HCT116 (cell line): ENCODE measurements at regions of chr7 and their contacts with region 1.

Region 1: GRCh38 chr7:93245525-93246432 is 13.6 kb downstream of the VPS50 start:
- DNase-seq: no peak
- ATAC-seq: no peak
- H3K4me3 ChIP-seq: no peak overlapping the region
- H3K27ac ChIP-seq: no peak overlapping the region
- H3K4me1 ChIP-seq: no peaks in the 10 kb centered on the region
- H3K27me3 ChIP-seq: no peaks in the 10 kb centered on the region
- CTCF ChIP-seq: peak; percentile 35 to 70 (median 63); a peak in 5 of 6 replicates
- POLR2A ChIP-seq: no peak
- RAD21 ChIP-seq: peak; percentile 72

Region 2: GRCh38 chr7:92973974-92974373 is 271.8 kb before region 1 on chr7:
- CTCF ChIA-PET with region 1: no interaction called
- POLR2A ChIA-PET with region 1: no interaction called
- RAD21 ChIA-PET with region 1: no interaction called
- intact Hi-C with region 1: no loop called
- DNase-seq: no peak
- ATAC-seq: no peak
- H3K4me3 ChIP-seq: no peak overlapping the region
- H3K27ac ChIP-seq: no peak overlapping the region
- H3K4me1 ChIP-seq: no peaks in the 10 kb centered on the region
- H3K27me3 ChIP-seq: no peaks in the 10 kb centered on the region
- CTCF ChIP-seq: no peak
- POLR2A ChIP-seq: no peak
- RAD21 ChIP-seq: no peak

Region 3: GRCh38 chr7:93430917-93431588 is 185.3 kb after region 1 on chr7:
- CTCF ChIA-PET with region 1: no interaction called
- POLR2A ChIA-PET with region 1: no interaction called
- RAD21 ChIA-PET with region 1: no interaction called
- intact Hi-C with region 1: loop called (anchors 10 kb)
- DNase-seq: no peak
- ATAC-seq: no peak
- H3K4me3 ChIP-seq: no peak overlapping the region
- H3K27ac ChIP-seq: no peak overlapping the region
- H3K4me1 ChIP-seq: no peaks in the 10 kb centered on the region
- H3K27me3 ChIP-seq: no peaks in the 10 kb centered on the region
- CTCF ChIP-seq: no peak
- POLR2A ChIP-seq: no peak
- RAD21 ChIP-seq: no peak

Region 4: GRCh38 chr7:94087664-94088352 is 842.0 kb after region 1 on chr7:
- CTCF ChIA-PET with region 1: interaction called, 4 read pairs
- POLR2A ChIA-PET with region 1: no interaction called
- RAD21 ChIA-PET with region 1: no interaction called
- intact Hi-C with region 1: loop called (anchors 5 kb)
- DNase-seq: peak; percentile 54
- ATAC-seq: peak; percentile 93
- H3K4me3 ChIP-seq: peak overlapping the region in 1 of 2 experiments; percentile 43; a peak in 1 of 4 replicates
- H3K27ac ChIP-seq: no peak overlapping the region
- H3K4me1 ChIP-seq: peaks cover 0 to 3% of the 10 kb centered on the region in 2 experiments; a peak in 1 of 4 replicates
- H3K27me3 ChIP-seq: peaks cover 26% of the 10 kb centered on the region; the same call in 1 of the 2 replicates
- CTCF ChIP-seq: peak; percentile 80 to 88 (median 82)
- POLR2A ChIP-seq: no peak
- RAD21 ChIP-seq: peak; percentile 75

Region 5: GRCh38 chr7:94276795-94277194 is 1031.0 kb after region 1 on chr7:
- CTCF ChIA-PET with region 1: no interaction called
- POLR2A ChIA-PET with region 1: no interaction called
- RAD21 ChIA-PET with region 1: no interaction called
- intact Hi-C with region 1: loop called (anchors 5 kb)
- DNase-seq: no peak
- ATAC-seq: peak; percentile 81
- H3K4me3 ChIP-seq: no peak overlapping the region
- H3K27ac ChIP-seq: no peak overlapping the region
- H3K4me1 ChIP-seq: no peaks in the 10 kb centered on the region
- H3K27me3 ChIP-seq: 0 out of 2 replicates have a peak, but pooled peaks cover 5% of the 10 kb centered on the region
- CTCF ChIP-seq: peak; percentile 17 to 53 (median 46); a peak in 3 of 6 replicates
- POLR2A ChIP-seq: no peak
- RAD21 ChIP-seq: peak; percentile 66

Region 6: DNA sequence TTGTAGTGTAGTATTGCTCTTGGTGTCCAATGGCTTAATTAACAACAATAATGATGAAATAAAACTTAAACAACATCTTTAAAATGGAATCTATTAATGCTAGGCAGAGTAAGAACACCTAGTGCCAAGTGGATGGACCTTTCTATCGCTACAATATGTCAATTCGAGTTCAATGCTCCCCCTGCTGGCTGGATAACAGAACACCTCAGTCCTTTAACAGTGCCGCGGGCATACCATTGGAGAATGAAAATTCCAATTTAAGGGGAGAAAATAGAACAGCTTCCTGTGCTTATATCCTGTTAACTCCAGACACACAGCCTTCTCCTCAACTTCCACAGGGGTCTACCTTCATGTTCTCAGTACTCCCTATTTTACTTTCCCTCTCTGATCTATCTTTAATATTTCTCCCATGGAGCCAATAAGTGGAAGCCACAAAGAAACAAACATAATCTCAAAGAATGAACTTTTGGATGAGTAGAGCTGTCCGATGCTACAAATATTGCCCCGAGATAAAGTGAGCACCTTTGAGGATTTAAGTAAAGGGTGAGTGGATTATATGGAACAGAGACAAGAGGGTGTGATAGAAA is 1190.3 kb after region 1 on chr7:
- CTCF ChIA-PET with region 1: no interaction called
- POLR2A ChIA-PET with region 1: no interaction called
- RAD21 ChIA-PET with region 1: no interaction called
- intact Hi-C with region 1: loop called (anchors 5 kb)
- DNase-seq: peak; percentile 54
- ATAC-seq: peak; percentile 99
- H3K4me3 ChIP-seq: no peak overlapping the region
- H3K27ac ChIP-seq: no peak overlapping the region
- H3K4me1 ChIP-seq: 0 out of 4 replicates have a peak, but pooled peaks cover 0 to 3% of the 10 kb centered on the region in 2 experiments
- H3K27me3 ChIP-seq: no peaks in the 10 kb centered on the region
- CTCF ChIP-seq: peak; percentile 70 to 85 (median 78)
- POLR2A ChIP-seq: no peak
- RAD21 ChIP-seq: peak; percentile 70